Astrocyte of the cerebellum (primary cell): ENCODE measurements at regions of chr2 and their contacts with region 1.

Region 1: GRCh38 chr2:71385012-71385411 is 53.4 kb downstream of the ZNF638 start:
- DNase-seq: peak; percentile 26
- H3K4me3 ChIP-seq: no peak overlapping the region
- CTCF ChIP-seq: no peak

Region 2: GRCh38 chr2:71276311-71277146 is 108.5 kb before region 1 on chr2:
- in situ Hi-C with region 1: no loop called
- DNase-seq: peak; percentile 46
- H3K4me3 ChIP-seq: peak overlapping the region; percentile 70
- CTCF ChIP-seq: no peak

Region 3: GRCh38 chr2:71423817-71424420 is 38.9 kb after region 1 on chr2:
- in situ Hi-C with region 1: loop called (anchors 5 kb)
- DNase-seq: no peak
- H3K4me3 ChIP-seq: no peak overlapping the region
- CTCF ChIP-seq: no peak